ENCODE measurements at regions of chr14 and their contacts with region 1.

Region 1: GRCh38 chr14:76918751-76919543 is 92.7 kb downstream of the LRRC74A start:
- DNase-seq: peak; percentile 97 to 99 (median 99)
- ATAC-seq: peak; percentile 93
- H3K4me3 ChIP-seq: no peak overlapping the region
- H3K27ac ChIP-seq: peak overlapping the region; percentile 97
- H3K4me1 ChIP-seq: peaks cover 27% of the 10 kb centered on the region
- H3K27me3 ChIP-seq: no peaks in the 10 kb centered on the region

Region 2: DNA sequence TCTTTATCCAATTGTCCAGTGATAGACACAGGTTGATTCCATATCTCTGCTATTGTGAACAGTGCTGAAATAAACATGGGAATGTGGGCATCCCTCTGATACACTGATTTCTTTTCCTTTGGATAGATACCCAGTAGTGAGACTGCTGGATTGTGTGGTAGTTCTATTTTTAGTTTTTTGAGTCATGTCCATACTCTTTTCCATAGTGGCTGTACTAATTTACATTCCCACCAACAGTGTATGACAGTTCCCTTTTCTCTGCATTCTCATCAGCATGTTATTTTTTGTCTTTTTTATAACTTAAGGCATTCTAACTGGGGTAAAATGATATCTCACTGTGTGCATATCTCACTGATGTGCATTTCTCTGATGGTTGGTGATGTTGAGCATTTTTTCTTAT is 182.4 kb before region 1 on chr14:
- intact Hi-C with region 1: no loop called
- DNase-seq: no peak
- ATAC-seq: no peak
- H3K4me3 ChIP-seq: no peak overlapping the region
- H3K27ac ChIP-seq: no peak overlapping the region
- H3K4me1 ChIP-seq: no peaks in the 10 kb centered on the region
- H3K27me3 ChIP-seq: no peaks in the 10 kb centered on the region

Region 3: GRCh38 chr14:76812211-76813044 is 106.5 kb before region 1 on chr14 and contains the start of gene ANGEL1:
- intact Hi-C with region 1: no loop called
- DNase-seq: peak; percentile 96 to 99 (median 99)
- ATAC-seq: peak; percentile 94
- H3K4me3 ChIP-seq: peak within 1 kb of the TSS; percentile 83
- H3K27ac ChIP-seq: peak within 1 kb of the TSS; percentile 80
- H3K4me1 ChIP-seq: no peaks in the 10 kb centered on the region
- H3K27me3 ChIP-seq: no peaks in the 10 kb centered on the region
- total RNA-seq, gene ANGEL1: 19.9 to 24.9 (median 20.3) TPM

Region 4: GRCh38 chr14:77028384-77029231 is 109.7 kb after region 1 on chr14 and contains the start of gene IRF2BPL:
- intact Hi-C with region 1: loop called in 1 of 4 experiments (anchors 10 kb)
- DNase-seq: peak; percentile 99 to 100 (median 100)
- ATAC-seq: peak; percentile 77 to 81
- H3K4me3 ChIP-seq: peak within 1 kb of the TSS; percentile 95
- H3K27ac ChIP-seq: peak within 1 kb of the TSS; percentile 99
- H3K4me1 ChIP-seq: peaks cover 8% of the 10 kb centered on the region
- H3K27me3 ChIP-seq: no peaks in the 10 kb centered on the region
- total RNA-seq, gene IRF2BPL: 43.5 to 61.2 (median 51.5) TPM